ENCODE measurements at regions of chr20 and their contacts with region 1.

Region 1: DNA sequence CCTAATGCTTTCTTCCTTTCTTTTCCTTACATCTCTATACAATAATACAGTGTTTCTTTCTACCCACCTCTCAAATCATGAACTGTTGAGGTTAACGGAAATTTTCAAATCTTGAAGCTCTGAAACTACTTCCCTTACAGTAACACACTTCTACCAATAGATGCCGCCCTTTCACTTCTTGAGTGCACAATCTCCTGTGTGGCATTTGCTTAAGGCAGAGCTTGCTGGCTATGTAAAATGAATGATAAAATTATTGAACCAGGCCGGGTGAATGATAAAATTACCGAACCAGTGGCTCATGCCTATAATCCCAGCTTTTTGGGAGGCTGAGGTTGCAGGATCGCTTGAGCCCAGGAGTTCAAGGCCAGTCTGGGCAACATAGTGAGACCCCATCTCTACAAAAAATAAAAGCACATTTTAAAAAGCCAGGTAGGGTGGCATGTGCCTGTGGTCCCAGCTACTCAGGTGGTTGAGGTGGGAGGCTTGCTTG is 56.8 kb downstream of the KCNS1 start:
- DNase-seq: no peak
- ATAC-seq: no peak

Region 2: DNA sequence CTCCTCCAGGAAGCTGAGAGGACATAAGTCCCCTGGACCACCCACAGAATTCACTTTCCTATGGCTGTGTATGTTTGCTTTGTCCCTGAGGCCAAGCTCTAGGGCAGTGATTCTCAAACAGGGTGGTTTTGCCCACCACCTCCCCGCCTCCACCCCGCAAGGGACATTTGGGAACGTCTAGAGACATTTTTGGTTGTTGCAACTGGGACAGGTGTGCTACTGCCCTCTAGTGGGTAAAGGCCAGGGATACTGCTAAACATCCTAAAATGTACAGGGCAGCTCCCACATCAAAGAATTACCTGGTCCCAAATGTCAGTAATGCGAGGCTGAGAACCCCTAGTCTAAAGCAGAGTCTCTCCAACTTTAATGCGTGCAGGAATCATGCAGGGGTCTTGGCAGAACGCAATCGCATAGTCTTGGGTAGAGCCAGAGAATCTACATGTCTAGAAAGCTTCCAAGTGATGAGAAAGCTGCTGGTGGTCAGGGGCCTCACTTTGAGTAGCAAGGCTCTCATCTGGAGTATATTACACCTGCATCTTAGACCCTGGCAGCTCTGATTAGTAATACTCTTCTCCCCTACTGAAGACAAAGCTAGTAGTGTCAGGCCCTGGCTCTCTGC is 51.7 kb after region 1 on chr20:
- intact Hi-C with region 1: loop called (anchors 1 kb)
- DNase-seq: no peak
- ATAC-seq: peak; percentile 15

Region 3: DNA sequence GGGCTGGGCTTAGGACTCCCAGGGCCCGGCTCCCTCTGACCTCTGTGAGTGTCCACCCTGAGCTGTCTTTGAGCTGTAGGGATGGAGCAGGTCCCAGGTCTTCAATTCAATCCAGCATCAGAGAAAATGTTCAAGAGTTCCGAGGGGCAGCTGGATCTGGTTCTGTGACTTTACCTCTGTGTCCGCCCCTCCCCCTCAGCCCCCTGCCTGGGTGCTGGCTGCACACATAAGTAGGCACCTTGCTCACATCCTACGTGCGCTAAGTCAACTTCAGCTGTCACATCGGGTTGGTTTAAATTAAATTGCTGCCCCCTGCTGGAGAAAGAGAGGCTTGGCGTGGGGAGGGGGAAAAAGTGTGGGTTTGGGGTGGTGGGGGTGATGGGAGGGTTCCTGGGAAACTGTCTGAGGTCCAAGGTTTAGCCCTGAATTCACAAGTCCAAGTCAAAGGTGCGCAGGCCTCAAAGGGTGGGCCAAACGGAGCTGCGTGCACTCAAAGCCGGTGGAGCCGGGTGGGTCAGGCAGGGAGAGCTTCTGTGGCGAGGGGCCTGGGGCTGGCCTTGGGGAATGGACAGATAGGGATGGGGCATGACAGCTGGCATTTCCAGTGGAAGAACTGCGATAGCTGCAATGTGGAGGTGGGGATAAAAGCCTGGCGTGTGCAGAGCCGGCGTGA is 67.8 kb after region 1 on chr20:
- intact Hi-C with region 1: loop called (anchors 5 kb)
- DNase-seq: no peak
- ATAC-seq: no peak

Region 4: DNA sequence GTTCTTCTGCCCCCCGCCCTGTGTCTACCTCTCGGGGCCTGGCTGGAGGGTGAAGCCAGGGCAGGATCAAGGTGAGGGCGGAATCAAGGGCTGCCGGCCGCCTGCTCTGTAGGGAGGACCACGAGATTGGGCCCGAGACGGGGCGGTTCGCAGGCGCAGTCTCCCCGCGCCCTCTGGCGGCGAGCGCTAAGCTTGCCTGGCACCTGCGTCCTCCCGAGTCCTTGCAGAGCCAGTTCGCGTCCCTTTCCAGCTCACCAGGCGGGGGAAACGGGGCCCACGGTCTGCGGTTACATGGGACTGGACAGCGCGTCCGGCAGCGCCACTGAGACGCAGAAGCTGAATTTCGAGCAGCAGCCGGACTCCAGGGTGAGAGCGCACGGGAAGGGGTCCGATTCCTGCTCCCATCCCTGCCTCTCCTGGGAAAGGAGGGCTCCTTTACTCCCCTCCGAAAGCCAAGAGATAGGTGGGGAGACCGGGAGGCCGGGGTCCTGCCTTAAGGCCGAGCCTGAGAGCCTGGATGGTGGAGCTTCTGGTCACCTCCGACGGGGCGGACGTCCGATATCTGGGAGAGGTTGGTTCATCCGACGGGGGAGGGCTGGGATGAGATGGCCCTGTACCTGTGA is 267.6 kb after region 1 on chr20:
- intact Hi-C with region 1: loop called (anchors 5 kb)
- DNase-seq: no peak
- ATAC-seq: no peak